Endothelial cell of umbilical vein (primary cell): ENCODE measurements at regions of chr3 and their contacts with region 1.

Region 1: DNA sequence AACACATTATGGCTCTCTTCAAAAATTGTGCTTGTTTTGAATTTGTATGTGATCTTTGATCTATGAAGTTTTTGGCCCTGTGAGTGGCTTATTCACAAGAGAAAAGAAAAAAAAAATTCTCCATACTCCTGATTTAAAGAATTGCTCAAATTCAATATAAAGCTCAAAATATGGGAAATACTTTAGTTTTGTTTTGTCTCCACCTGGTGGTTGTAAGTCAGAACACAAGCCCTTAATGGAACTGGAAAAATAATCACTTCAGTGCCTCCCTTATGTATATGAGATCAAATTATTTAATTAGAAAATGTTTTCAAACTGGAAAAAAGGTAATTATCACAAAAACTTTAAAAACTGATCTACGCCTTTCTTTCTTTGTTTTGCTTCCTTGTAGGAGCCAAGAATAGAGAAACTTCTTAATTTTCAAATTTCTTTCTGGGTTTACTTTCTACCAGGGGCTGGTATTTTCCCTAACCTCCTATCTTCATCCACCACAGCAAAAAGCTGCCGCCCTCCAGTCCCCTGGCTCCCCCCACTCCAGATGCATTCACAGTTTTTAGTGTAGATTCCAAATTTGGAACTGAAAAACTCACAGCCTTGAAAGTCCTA is 50.6 kb downstream of the SERP1 start:
- DNase-seq: peak; percentile 75
- H3K4me3 ChIP-seq: no peak overlapping the region
- H3K27ac ChIP-seq: no peak overlapping the region
- H3K4me1 ChIP-seq: peaks cover 9% of the 10 kb centered on the region
- H3K27me3 ChIP-seq: no peaks in the 10 kb centered on the region
- CTCF ChIP-seq: peak; percentile 36 to 42
- POLR2A ChIP-seq: no peak

Region 2: GRCh38 chr3:149936812-149937233 is 558.8 kb before region 1 on chr3:
- CTCF ChIA-PET with region 1: interaction called, 25 read pairs
- POLR2A ChIA-PET with region 1: no interaction called
- dilution Hi-C with region 1: no loop called
- intact Hi-C with region 1: loop called (anchors 10 kb)
- DNase-seq: peak; percentile 70
- H3K4me3 ChIP-seq: no peak overlapping the region
- H3K27ac ChIP-seq: no peak overlapping the region
- H3K4me1 ChIP-seq: peaks cover 2% of the 10 kb centered on the region
- H3K27me3 ChIP-seq: no peaks in the 10 kb centered on the region
- CTCF ChIP-seq: peak; percentile 70 to 76
- POLR2A ChIP-seq: no peak

Region 3: DNA sequence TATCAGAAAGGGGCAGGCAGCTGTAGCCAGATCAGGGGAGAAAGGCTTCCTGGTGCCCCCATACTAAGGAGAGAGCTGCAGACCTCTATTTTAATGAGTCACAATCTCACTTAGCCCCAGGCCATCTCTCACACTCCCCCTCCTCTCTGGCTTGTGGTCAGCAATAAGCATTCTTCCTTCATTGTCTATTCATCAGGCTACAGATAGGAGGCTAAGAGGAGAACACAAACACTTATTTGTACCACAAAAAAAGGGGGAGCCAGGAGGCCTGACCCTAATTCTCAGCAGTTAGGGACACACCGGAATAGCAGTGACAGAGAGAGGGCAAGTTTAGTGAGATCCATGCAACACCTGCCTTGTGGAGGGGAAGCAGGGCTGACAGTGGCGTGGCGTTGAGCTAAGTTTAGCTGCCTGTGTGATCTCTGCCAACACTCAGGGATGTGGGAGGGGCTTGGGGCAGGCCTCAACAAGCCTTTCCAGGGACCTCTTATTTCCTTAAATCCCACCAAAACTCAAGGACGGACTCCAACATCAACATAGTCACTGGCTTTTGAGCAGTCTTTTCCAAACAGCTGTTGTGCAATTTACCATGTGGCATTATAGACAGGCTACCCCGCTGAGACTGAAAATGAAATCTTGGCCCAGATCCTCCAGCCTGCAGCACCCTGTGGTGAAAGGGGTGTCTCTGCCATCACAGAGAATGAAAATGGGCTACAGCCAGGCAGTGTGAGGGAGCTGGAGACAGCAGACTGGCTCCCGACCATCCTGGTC is 279.4 kb before region 1 on chr3:
- CTCF ChIA-PET with region 1: interaction called, 26 read pairs
- POLR2A ChIA-PET with region 1: no interaction called
- dilution Hi-C with region 1: no loop called
- intact Hi-C with region 1: no loop called
- DNase-seq: peak; percentile 12
- H3K4me3 ChIP-seq: no peak overlapping the region
- H3K27ac ChIP-seq: no peak overlapping the region
- H3K4me1 ChIP-seq: no peaks in the 10 kb centered on the region
- H3K27me3 ChIP-seq: peaks cover 24 to 26% of the 10 kb centered on the region in 2 experiments
- CTCF ChIP-seq: no peak
- POLR2A ChIP-seq: no peak

Region 4: GRCh38 chr3:150286390-150287147 is 209.1 kb before region 1 on chr3:
- CTCF ChIA-PET with region 1: interaction called, 29 read pairs
- POLR2A ChIA-PET with region 1: no interaction called
- dilution Hi-C with region 1: no loop called
- intact Hi-C with region 1: loop called (anchors 1 kb)
- DNase-seq: peak; percentile 68
- H3K4me3 ChIP-seq: no peak overlapping the region
- H3K27ac ChIP-seq: no peak overlapping the region
- H3K4me1 ChIP-seq: no peaks in the 10 kb centered on the region
- H3K27me3 ChIP-seq: no peaks in the 10 kb centered on the region
- CTCF ChIP-seq: peak; percentile 41 to 55
- POLR2A ChIP-seq: no peak

Region 5: DNA sequence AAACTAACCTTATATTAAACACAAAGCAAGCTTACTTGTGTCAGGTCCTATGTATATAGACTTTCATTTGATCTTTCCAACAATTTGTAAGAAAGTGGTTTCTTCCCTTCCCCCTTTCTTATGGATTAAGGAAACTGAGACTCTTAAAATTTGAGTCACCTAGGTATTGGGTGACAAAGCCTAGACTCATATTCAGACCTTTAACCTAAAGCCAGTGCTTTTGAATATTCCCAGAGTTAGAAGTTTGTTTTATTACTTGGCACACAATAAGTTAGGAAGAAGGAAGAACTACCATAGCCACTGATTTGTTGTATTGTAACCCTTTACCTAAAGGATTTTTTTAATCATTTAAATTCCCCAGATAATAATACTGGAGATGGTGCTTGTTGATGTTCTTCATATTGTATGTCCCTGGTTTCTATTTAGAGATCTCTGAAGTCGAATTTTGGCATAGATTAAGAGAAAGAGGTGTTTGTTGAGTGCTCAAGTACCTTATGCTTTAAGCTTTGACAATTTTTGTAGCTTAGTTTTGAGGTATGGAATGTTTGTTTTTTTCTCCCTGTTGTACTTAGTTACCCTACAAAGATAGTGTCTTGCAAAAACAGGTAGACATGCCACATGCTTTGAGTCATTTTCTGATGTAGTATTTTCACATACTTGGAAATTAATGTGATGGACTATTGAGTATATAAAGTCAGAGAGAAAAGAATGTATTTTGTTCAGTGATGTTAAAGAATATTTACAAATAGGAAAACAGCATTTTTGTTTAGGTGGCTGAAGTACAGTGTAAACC is 76.4 kb before region 1 on chr3:
- CTCF ChIA-PET with region 1: interaction called, 219 read pairs
- POLR2A ChIA-PET with region 1: no interaction called
- dilution Hi-C with region 1: no loop called
- intact Hi-C with region 1: no loop called
- DNase-seq: no peak
- H3K4me3 ChIP-seq: no peak overlapping the region
- H3K27ac ChIP-seq: no peak overlapping the region
- H3K4me1 ChIP-seq: peaks cover 49% of the 10 kb centered on the region
- H3K27me3 ChIP-seq: no peaks in the 10 kb centered on the region
- CTCF ChIP-seq: no peak
- POLR2A ChIP-seq: no peak

Region 6: DNA sequence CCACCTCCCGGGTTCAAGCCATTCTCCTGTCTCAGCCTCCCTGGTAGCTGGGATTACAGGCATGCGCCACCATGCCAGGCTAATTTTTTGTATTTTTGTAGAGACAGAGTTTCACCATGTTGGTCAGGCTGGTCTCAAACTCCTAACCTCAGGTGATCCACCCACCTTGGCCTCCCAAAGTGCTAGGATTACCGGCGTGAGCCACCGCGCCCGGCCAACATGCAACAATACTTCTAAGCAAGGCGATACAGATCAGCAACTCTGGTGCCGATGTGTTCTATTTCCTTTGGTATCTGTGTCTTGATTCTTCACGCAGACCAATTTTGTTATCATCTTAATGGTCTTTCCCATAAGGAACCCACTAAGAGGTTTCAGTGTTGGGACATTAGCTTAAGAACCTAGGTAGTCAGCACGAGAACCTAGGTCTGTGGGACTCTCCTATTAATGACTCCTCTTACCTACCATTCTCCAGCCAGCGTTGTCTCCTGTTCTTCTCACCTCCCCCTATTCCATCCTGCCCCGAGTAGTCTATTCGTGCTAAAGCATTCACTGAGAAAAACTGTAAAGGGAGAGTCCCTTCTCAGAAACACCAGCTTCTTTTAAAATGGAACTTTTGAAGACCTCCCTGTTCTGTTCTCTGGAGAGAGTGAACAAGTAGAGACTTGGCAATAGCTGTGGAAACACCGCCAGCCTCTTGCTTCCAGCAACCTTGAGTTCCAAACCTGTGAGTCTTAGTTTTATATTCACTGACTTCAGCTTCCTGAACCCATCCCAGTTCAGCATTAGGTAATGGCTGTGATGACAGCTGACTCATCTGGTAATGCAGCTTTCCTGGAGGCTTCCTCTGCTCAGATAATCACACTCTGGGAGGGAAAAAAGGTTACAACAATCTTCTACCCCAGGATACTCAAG is 26.4 kb before region 1 on chr3:
- CTCF ChIA-PET with region 1: interaction called, 25 read pairs
- POLR2A ChIA-PET with region 1: no interaction called
- dilution Hi-C with region 1: no loop called
- intact Hi-C with region 1: no loop called
- DNase-seq: peak; percentile 88
- H3K4me3 ChIP-seq: peak overlapping the region in 1 of 3 experiments; percentile 15
- H3K27ac ChIP-seq: peak overlapping the region; percentile 83
- H3K4me1 ChIP-seq: peaks cover 28% of the 10 kb centered on the region
- H3K27me3 ChIP-seq: no peaks in the 10 kb centered on the region
- CTCF ChIP-seq: no peak
- POLR2A ChIP-seq: no peak